AG04450 (cell line): ENCODE measurements at regions of chr6 and their contacts with region 1.

Region 1: GRCh38 chr6:25263657-25264056 is 15.5 kb upstream of the CARMIL1 start:
- DNase-seq: no peak
- H3K4me3 ChIP-seq: no peak overlapping the region
- H3K27ac ChIP-seq: no peak overlapping the region
- H3K27me3 ChIP-seq: no peaks in the 10 kb centered on the region
- CTCF ChIP-seq: no peak

Region 2: GRCh38 chr6:25223490-25223991 is 40.1 kb before region 1 on chr6:
- CTCF ChIA-PET with region 1: interaction called, 32 read pairs
- POLR2A ChIA-PET with region 1: no interaction called
- DNase-seq: peak; percentile 37
- H3K4me3 ChIP-seq: peak overlapping the region; percentile 8
- H3K27ac ChIP-seq: no peak overlapping the region
- H3K27me3 ChIP-seq: no peaks in the 10 kb centered on the region
- CTCF ChIP-seq: peak; percentile 95

Region 3: GRCh38 chr6:25250878-25251277 is 12.8 kb before region 1 on chr6:
- CTCF ChIA-PET with region 1: interaction called, 71 read pairs
- POLR2A ChIA-PET with region 1: no interaction called
- DNase-seq: no peak
- H3K4me3 ChIP-seq: no peak overlapping the region
- H3K27ac ChIP-seq: no peak overlapping the region
- H3K27me3 ChIP-seq: no peaks in the 10 kb centered on the region
- CTCF ChIP-seq: no peak

Region 4: GRCh38 chr6:25312703-25313501 is 49.2 kb after region 1 on chr6:
- CTCF ChIA-PET with region 1: interaction called, 11 read pairs
- POLR2A ChIA-PET with region 1: no interaction called
- DNase-seq: no peak
- H3K4me3 ChIP-seq: no peak overlapping the region
- H3K27ac ChIP-seq: peak overlapping the region; percentile 31
- H3K27me3 ChIP-seq: no peaks in the 10 kb centered on the region
- CTCF ChIP-seq: peak; percentile 12; the same call in 1 of the 2 replicates

Region 5: DNA sequence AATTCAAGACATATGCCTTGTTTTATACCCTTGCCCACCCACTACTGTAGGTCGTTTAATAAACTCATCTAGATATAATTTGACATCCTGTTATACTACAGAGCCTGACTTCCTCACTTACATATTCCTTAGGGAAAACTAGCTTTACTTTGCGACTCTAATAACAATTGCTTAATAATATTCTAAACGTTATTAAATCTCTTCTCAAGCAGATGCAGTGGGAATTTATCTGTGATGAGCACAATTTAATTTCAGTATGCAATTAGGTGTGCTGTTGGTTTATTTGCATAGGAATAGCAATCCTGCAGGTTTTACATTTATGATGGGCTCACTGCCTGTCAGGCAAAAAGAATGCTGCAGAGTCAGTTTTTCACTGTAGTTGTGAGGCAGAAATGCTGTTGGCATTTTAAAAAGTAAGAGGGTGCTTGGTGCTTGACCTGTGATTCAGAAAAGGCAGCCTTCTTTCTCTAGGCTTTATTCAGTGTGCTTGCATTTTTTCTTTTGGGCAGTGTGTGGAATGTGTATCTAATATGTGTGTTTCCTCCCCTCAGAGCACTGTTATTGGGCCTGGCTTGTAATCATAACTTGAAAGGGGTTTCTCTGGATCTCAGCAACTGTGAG is 236.1 kb after region 1 on chr6:
- CTCF ChIA-PET with region 1: interaction called, 15 read pairs
- POLR2A ChIA-PET with region 1: no interaction called
- DNase-seq: no peak
- H3K4me3 ChIP-seq: no peak overlapping the region
- H3K27ac ChIP-seq: no peak overlapping the region
- H3K27me3 ChIP-seq: no peaks in the 10 kb centered on the region
- CTCF ChIP-seq: no peak

Region 6: GRCh38 chr6:25556516-25556915 is 292.9 kb after region 1 on chr6:
- CTCF ChIA-PET with region 1: interaction called, 102 read pairs
- POLR2A ChIA-PET with region 1: no interaction called
- DNase-seq: peak; percentile 42
- H3K4me3 ChIP-seq: no peak overlapping the region
- H3K27ac ChIP-seq: no peak overlapping the region
- H3K27me3 ChIP-seq: no peaks in the 10 kb centered on the region
- CTCF ChIP-seq: peak; percentile 87